ENCODE measurements at regions of chr2 and their contacts with region 1.

Region 1: GRCh38 chr2:9310377-9310776 is 103.8 kb downstream of the ASAP2 start:
- DNase-seq: peak; percentile 35 to 84
- H3K4me3 ChIP-seq: no peak overlapping the region
- H3K27ac ChIP-seq: peak overlapping the region; percentile 77 to 80
- H3K4me1 ChIP-seq: peaks cover 10 to 57% of the 10 kb centered on the region in 2 donors
- H3K27me3 ChIP-seq: no peaks in the 10 kb centered on the region
- CTCF ChIP-seq: no peak

Region 2: DNA sequence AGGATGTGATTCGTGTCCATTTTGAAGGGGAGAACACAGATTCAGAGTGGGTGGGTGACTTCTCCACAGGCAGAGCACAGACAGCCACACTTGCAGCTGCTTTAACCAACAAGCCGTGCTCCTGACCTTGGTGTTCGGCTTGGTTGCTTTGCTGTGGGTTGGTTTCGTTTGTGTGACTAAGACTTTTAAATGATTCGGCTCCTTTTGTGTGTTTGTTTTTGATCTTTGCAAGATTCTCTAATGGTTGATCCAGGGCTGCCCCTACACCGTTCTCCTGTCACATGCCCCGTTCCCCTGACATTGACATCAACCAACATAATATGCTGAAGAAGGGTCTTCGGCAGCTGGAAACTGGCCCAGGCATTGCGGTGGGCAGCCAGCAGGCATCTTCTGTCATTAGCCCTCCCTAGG is 211.0 kb before region 1 on chr2:
- intact Hi-C with region 1: no loop called
- DNase-seq: no peak
- H3K4me3 ChIP-seq: no peak overlapping the region
- H3K27ac ChIP-seq: no peak overlapping the region
- H3K4me1 ChIP-seq: peaks cover 0 to 4% of the 10 kb centered on the region in 2 donors
- H3K27me3 ChIP-seq: no peaks in the 10 kb centered on the region
- CTCF ChIP-seq: no peak

Region 3: DNA sequence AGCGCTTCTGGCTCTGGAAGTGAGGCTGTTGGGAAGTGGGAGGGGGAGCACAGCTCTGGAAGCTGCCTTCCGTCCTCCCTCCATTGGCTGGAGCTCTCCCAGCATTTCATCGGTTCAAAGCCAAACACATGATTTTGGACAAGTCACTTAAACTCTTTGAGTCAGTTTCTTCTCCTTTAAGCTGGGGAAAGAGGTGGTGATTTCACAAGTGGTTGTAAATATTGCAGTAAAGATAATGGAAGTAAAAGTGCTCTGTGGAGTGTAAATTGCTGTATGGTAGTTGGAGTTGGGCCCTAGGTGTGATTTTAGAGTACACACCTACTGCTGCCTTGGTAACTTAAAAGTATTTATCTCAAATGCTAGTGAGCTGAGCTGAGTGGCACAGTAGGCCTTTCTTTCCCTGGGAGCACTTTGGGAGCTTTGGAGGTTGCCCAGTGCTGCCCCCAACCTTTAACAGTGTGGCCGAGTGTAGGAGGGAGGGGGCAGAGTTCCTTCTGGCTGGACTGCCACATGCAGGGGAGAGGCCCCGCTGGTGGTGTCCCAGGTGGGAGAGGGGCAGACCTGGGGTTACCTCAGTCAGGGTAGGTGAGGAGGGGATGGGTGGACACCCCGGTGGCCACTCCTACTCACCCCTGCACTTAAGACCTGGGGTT is 49.0 kb before region 1 on chr2:
- intact Hi-C with region 1: loop called (anchors 5 kb)
- DNase-seq: peak in 1 of 2 donors; percentile 78
- H3K4me3 ChIP-seq: no peak overlapping the region
- H3K27ac ChIP-seq: peak overlapping the region; percentile 85
- H3K4me1 ChIP-seq: peaks cover 39 to 82% of the 10 kb centered on the region in 2 donors
- H3K27me3 ChIP-seq: no peaks in the 10 kb centered on the region
- CTCF ChIP-seq: peak in 1 of 3 experiments; percentile 5